ENCODE measurements at regions of chr16 and their contacts with region 1.

Region 1: DNA sequence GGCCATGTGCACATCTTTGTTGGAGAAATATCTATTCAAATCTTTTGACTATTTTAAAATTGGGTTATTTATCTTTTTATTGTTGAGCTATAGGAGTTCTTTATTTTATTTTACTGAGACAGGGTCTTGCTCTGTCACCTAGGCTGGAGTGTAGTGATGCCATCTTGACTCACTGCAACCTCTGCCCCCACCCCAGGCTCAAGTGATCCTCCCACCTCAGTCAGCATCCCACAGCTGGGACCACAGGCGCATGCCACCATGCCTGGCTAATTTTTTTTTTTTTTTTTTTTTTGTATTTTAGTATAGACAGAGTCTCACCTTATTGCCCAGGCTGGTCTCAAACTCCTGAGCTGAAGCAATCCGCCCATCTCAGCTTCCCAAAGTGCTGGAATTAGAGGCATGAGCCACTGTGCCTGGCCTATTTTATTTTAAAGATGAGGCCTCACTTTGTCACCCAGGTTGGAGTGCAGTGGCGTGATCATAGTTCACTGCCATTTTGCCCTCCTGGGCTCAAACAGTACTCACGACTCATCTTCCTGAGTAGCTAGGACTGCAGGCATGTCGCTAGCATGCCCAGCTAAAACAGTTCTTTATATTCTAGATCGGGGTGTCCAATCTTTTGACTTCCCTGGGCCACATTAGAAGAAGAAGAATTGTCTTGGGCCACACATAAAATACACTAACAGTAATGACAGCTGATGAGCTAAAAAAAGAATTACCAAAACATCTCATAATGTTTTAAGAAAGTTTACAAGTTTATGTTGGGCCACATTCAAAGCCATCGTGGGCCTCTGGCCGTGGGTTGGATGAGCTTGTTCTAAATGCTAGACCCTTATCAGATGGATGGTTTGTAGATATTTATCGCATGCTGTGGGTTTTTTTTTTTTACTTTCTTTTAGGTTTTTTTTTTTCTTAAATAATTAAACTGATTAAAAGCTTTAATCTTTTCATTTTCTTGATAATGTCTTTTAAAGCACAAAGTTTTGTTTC is 13.7 kb downstream of the TENT4B start:
- DNase-seq: no peak
- ATAC-seq: no peak
- H3K4me3 ChIP-seq: no peak overlapping the region
- H3K27ac ChIP-seq: no peak overlapping the region
- H3K4me1 ChIP-seq: peaks cover 5% of the 10 kb centered on the region; the same call in 1 of the 2 replicates
- H3K27me3 ChIP-seq: no peaks in the 10 kb centered on the region
- CTCF ChIP-seq: no peak

Region 2: GRCh38 chr16:50065624-50066481 is 101.0 kb before region 1 on chr16 and contains the start of gene HEATR3:
- CTCF ChIA-PET with region 1: no interaction called
- POLR2A ChIA-PET with region 1: interaction called, 11 read pairs
- in situ Hi-C with region 1: no loop called
- intact Hi-C with region 1: no loop called
- DNase-seq: peak; percentile 71
- ATAC-seq: peak; percentile 94
- H3K4me3 ChIP-seq: peak within 1 kb of the TSS; percentile 84 to 87
- H3K27ac ChIP-seq: peak within 1 kb of the TSS; percentile 83
- H3K4me1 ChIP-seq: no peaks in the 10 kb centered on the region
- H3K27me3 ChIP-seq: no peaks in the 10 kb centered on the region
- CTCF ChIP-seq: no peak
- total RNA-seq, gene HEATR3: 18.6 TPM

Region 3: DNA sequence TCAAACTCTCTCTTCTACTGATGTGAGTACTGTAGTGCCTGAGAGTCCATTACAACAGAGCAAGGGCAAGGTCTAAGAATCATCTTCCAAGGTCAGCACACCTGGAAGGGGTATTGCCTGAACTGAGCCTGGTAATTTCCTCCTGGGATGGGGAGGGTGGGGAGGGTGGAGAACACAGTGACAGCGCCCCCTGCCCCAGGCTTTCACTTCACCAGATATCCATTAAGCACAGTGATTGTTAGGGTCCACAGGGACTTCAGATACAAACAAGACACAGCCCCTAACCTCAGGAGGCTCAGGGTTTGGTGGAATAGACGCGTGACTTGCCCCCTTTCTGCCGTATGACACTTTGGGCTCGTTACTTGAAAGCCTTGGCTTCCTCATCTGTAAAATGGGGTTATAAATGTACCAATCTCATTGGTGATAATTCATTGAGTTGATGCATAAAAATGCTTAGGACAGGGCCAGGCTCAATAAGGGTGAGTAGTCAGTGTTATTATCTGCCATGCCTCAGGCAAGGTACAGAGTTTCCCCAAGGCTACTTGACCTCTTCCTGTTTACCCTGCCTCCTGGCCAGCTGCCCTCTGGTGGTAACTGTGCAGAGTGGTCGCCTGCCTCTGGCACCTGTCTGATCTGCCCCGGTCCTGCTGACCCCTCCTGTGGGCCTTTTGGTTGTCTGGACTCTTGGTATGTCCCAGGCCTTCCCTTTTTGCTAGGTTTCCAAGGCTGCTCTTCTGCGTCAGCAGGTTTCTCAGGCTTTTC is 215.1 kb after region 1 on chr16:
- CTCF ChIA-PET with region 1: no interaction called
- POLR2A ChIA-PET with region 1: no interaction called
- in situ Hi-C with region 1: no loop called
- intact Hi-C with region 1: no loop called
- DNase-seq: no peak
- ATAC-seq: no peak
- H3K4me3 ChIP-seq: no peak overlapping the region
- H3K27ac ChIP-seq: no peak overlapping the region
- H3K4me1 ChIP-seq: no peaks in the 10 kb centered on the region
- H3K27me3 ChIP-seq: no peaks in the 10 kb centered on the region
- CTCF ChIP-seq: no peak

Region 4: DNA sequence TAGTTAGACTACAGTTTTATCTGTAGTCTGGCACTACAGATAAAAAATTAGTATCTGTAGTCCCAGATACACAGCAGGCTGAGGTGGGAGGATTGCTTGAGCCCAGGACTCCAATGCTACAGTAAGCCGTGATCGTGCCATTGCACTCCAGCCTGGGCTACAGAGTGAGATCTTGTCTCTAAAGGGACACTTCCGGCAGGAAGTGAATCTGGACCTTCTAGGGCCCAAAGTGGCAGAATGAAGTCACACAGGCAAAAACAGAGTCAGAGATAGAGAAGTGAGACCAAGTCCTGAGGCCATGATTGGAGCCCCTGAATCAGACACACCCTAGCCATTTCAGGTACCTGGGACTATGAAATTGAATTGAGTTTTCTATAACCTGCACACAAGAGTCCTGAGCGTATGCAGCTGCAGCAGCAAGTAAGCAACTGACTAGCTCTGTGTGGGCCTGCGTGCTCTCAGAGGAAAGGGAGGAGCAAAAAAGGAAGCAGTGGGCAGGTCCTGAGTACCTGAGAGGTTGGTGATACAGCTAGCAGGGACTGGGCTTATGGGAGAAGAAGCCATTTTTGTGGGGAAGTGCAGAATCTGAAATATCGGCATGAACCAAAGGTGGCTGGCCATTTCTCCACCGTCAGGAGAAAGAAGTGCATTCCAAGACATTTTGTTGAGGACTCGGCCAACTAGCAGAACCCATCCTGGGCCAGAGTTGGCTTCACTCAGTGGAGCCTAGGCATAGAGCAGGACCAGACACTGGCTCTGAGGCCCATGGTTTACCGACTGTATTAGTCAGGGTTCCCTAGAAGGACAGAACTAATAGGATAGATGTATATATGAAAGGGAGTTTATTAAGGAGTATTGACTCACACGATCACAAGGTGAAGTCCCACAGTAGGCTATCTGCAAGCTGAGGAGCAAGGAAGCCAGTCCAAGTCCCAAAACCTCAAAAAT is 229.2 kb after region 1 on chr16:
- CTCF ChIA-PET with region 1: no interaction called
- POLR2A ChIA-PET with region 1: no interaction called
- in situ Hi-C with region 1: no loop called
- intact Hi-C with region 1: no loop called
- DNase-seq: no peak
- ATAC-seq: no peak
- H3K4me3 ChIP-seq: no peak overlapping the region
- H3K27ac ChIP-seq: no peak overlapping the region
- H3K4me1 ChIP-seq: no peaks in the 10 kb centered on the region
- H3K27me3 ChIP-seq: no peaks in the 10 kb centered on the region
- CTCF ChIP-seq: no peak

Region 5: GRCh38 chr16:51290442-51291285 is 1123.9 kb after region 1 on chr16:
- CTCF ChIA-PET with region 1: no interaction called
- POLR2A ChIA-PET with region 1: interaction called, 10 read pairs
- in situ Hi-C with region 1: no loop called
- intact Hi-C with region 1: no loop called
- DNase-seq: no peak
- ATAC-seq: no peak
- H3K4me3 ChIP-seq: no peak overlapping the region
- H3K27ac ChIP-seq: no peak overlapping the region
- H3K4me1 ChIP-seq: no peaks in the 10 kb centered on the region
- H3K27me3 ChIP-seq: no peaks in the 10 kb centered on the region
- CTCF ChIP-seq: no peak